ENCODE measurements at regions of chr9 and their contacts with region 1.

Region 1: DNA sequence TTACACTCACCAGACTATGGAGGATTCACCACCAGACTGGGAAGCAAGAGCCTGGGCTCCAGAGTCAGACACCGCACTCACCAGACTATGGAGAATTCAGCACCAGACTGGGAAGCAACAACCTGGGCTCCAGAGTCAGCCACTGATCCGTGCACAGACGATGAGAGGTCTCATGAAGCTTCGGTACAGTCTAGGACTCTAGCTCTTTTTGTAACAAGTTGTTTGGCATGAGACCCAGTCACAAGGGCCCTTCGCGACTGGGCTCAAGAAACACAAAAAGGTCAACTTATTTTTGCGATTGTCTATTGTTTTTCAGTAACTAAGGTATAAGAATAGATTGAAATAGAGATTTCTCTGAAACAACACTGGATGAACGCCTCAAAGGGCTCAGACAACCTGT is 192.7 kb upstream of the ADAMTSL1 start:
- DNase-seq: no peak
- ATAC-seq: no peak
- H3K4me3 ChIP-seq: no peak overlapping the region
- H3K27ac ChIP-seq: no peak overlapping the region
- H3K4me1 ChIP-seq: no peaks in the 10 kb centered on the region
- H3K27me3 ChIP-seq: no peaks in the 10 kb centered on the region
- CTCF ChIP-seq: no peak

Region 2: GRCh38 chr9:17962747-17963146 is 318.5 kb before region 1 on chr9:
- intact Hi-C with region 1: no loop called
- DNase-seq: no peak
- ATAC-seq: peak in 2 of 4 donors; percentile 58
- H3K4me3 ChIP-seq: no peak overlapping the region
- H3K27ac ChIP-seq: no peak overlapping the region
- H3K4me1 ChIP-seq: no peaks in the 10 kb centered on the region
- H3K27me3 ChIP-seq: no peaks in the 10 kb centered on the region
- CTCF ChIP-seq: no peak

Region 3: GRCh38 chr9:18215626-18216025 is 65.7 kb before region 1 on chr9:
- intact Hi-C with region 1: no loop called
- DNase-seq: no peak
- ATAC-seq: no peak
- H3K4me3 ChIP-seq: no peak overlapping the region
- H3K27ac ChIP-seq: no peak overlapping the region
- H3K4me1 ChIP-seq: no peaks in the 10 kb centered on the region
- H3K27me3 ChIP-seq: no peaks in the 10 kb centered on the region
- CTCF ChIP-seq: no peak

Region 4: DNA sequence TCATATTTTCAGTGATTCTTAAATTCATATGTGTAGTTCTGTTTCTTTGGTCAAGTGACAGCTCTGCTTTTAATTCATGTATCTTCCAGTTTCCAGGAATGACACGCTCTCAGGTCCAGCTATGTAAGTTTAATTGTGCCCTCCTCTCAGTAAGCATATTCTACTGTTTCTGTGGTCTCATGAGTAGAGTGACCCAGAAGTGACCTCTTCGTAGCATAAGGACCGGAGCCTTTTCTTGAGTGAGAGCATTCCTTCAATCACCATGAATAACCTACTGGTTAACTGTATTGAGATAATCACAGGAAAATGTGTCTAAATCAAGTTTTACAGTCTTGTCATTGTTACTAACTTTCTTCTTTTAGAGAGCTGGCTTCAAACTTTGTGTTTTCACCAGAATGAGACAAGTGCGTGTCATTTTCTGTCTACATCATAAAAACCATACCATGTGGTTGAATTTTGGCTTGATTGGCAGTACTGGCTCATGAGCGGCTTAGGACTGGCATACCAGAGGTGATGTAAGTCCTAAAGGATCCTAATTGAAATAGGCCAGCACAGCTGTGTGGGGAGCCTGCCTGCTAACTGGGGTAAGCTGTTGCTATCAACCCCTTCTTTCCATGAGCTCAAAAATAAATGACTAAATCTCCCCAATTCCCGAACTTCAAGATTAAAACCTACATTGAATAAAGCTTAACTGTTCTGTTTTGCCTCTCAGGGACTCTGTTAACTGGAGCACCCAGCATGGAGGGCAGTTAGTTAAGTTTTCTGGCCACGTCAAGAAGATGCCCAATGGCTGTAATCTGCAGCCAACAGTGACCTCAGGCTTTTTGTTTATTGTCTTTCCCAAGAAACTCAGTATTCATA is 197.4 kb after region 1 on chr9:
- intact Hi-C with region 1: loop called in 1 of 2 experiments (anchors 5 kb)
- DNase-seq: peak in 1 of 2 donors; percentile 40
- ATAC-seq: no peak
- H3K4me3 ChIP-seq: no peak overlapping the region
- H3K27ac ChIP-seq: no peak overlapping the region
- H3K4me1 ChIP-seq: no peaks in the 10 kb centered on the region
- H3K27me3 ChIP-seq: peaks cover 0 to 2% (median 0%) of the 10 kb centered on the region in 3 donors
- CTCF ChIP-seq: no peak